Left ventricle myocardium superior (tissue), 1 donor: ENCODE measurements at regions of chr12 and their contacts with region 1.

Region 1: GRCh38 chr12:46342562-46343033 is 30.0 kb downstream of the SLC38A2 start:
- DNase-seq: peak; percentile 19
- ATAC-seq: peak; percentile 87

Region 2: GRCh38 chr12:47021298-47021697 is 678.7 kb after region 1 on chr12:
- intact Hi-C with region 1: loop called (anchors 5 kb)
- DNase-seq: no peak
- ATAC-seq: peak; percentile 34